ENCODE measurements at regions of chr21 and their contacts with region 1.

Region 1: DNA sequence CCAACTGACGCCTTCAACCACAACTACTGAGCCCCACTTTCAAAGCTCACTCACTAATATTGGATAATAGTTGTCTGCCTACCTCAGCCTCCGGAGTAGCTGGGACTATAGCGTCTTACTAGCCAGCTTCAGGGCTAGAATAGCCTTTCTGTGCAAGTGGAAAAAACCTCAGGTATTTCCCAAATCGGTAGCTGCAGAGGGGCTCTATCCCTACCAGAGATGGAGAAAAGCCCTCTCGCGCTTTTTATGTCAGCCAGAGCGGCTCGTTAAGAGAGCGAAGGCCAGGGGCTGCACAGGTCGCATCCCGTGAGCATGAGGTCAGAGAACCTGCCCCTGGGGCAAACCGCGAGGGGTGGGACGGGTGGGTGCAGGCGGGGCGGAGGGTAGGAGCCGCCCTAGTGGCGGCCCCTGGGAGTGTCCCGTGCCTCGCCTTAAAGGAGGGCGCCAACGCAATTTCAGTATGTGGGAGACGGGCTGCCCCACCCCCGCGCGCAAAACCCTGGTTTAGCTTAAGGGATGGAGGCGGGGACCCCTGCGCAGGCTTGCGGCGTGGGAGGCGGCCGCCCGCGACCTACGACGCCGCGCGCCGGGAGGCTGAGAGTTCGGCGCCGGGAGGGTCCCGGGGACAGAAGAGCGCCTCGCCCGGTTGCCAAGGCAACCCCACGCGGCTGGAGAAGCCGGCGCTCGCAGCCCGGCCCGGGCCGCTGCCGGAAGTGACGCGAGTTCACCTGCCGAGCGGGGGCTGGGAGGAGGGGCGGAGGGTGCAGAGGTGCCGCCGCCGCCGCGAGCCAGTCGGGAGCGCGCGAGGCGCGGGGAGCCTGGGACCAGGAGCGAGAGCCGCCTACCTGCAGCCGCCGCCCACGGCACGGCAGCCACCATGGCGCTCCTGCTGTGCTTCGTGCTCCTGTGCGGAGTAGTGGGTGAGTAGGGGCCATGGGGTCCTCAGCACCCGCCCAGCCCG is at the start of gene CXADR:
- DNase-seq: peak; percentile 50 to 88 (median 76)
- ATAC-seq: peak; percentile 79
- H3K4me3 ChIP-seq: peak within 1 kb of the TSS; percentile 56 to 58
- H3K4me3 Mint-ChIP-seq: peak within 1 kb of the TSS; percentile 90
- H3K27ac ChIP-seq: no peak within 1 kb of the TSS
- H3K27ac Mint-ChIP-seq: peak within 1 kb of the TSS; percentile 15
- H3K4me1 ChIP-seq: peaks cover 14% of the 10 kb centered on the region
- H3K4me1 Mint-ChIP-seq: peaks cover 17% of the 10 kb centered on the region
- H3K27me3 ChIP-seq: peaks cover 0 to 7% of the 10 kb centered on the region in 2 experiments
- H3K27me3 Mint-ChIP-seq: peaks cover 16% of the 10 kb centered on the region
- CTCF ChIP-seq: peak; percentile 47
- total RNA-seq, gene CXADR: 0.69 to 1.0 TPM

Region 2: DNA sequence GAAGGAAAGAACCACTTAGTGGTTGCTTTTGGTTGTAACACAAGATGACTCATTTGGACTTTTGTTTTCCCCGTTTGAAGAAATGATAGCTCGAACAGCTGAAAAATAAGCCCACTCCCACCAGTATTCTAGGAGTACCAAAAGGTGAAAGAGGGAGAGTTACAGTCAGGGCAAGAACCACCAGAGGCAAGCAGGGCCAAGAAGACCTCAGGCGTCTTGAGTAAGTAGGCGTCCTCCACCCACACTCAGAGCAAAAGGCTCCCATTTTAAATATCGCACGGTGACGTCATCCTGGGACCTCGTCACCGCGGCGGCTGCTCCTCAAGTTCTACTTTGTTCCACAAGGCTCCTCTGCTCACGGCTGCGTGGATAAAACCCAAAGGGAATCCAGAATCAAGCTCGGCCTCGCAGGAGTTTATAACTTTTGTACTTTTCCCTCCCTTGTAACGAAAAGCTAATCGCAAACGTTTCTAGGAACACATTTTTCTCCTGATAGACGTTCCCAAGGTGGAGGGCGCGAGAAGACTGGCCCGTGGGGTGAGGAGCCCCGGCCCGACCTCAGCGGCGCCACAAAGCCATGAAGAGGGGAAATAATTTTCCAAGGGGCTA is 99.0 kb after region 1 on chr21:
- CTCF ChIA-PET with region 1: no interaction called
- POLR2A ChIA-PET with region 1: interaction called, 4 read pairs
- intact Hi-C with region 1: loop called (anchors 1 to 5 kb)
- DNase-seq: peak; percentile 52 to 92 (median 78)
- ATAC-seq: peak; percentile 69
- H3K4me3 ChIP-seq: peak overlapping the region; percentile 78 to 92
- H3K4me3 Mint-ChIP-seq: peak overlapping the region; percentile 91
- H3K27ac ChIP-seq: peak overlapping the region; percentile 67 to 79
- H3K27ac Mint-ChIP-seq: peak overlapping the region; percentile 96
- H3K4me1 ChIP-seq: peaks cover 12% of the 10 kb centered on the region
- H3K4me1 Mint-ChIP-seq: peaks cover 26% of the 10 kb centered on the region
- H3K27me3 ChIP-seq: no peaks in the 10 kb centered on the region
- H3K27me3 Mint-ChIP-seq: no peaks in the 10 kb centered on the region
- CTCF ChIP-seq: no peak